ENCODE measurements at regions of chr1 and their contacts with region 1.

Region 1: DNA sequence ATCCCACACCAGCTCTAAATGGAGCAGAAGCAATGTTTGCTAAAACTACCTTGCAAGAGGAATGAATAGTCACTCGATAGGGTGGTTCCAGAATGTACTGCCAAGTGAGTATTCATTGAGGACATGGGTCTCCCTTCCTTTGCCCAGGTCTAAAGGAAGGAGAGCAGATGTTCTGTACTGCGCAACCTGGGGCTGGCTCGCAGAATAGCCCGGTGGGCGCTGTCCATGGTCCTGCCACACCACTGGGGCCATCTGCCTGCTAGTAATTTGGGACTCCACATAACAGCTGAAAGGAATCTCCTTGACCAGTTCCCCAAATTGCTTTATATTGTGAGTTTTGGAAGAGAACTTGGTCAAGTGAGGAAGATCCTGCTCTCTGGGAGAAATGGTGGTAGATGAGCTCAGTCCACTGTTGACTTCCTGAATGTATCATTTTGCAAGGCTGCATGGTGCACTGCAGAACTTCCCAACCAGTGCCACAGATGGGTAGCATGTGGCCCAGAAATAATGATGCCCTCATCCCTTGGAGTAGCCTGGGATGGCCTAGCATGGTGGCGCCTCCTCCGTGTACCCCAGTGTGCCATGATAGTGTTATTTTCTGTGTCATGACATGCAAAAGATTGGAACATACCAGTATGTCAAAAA is 5.7 kb downstream of the SLC6A17 start:
- DNase-seq: peak; percentile 71
- H3K4me3 Mint-ChIP-seq: no peak overlapping the region
- H3K27ac Mint-ChIP-seq: no peak overlapping the region
- H3K4me1 Mint-ChIP-seq: no peaks in the 10 kb centered on the region
- H3K27me3 Mint-ChIP-seq: peaks cover 53% of the 10 kb centered on the region

Region 2: GRCh38 chr1:109397538-109398342 is 758.3 kb before region 1 on chr1 and contains the start of gene SORT1:
- CTCF ChIA-PET with region 1: no interaction called
- intact Hi-C with region 1: no loop called
- DNase-seq: peak; percentile 53
- H3K4me3 Mint-ChIP-seq: peak within 1 kb of the TSS; percentile 77
- H3K27ac Mint-ChIP-seq: no peak within 1 kb of the TSS
- H3K4me1 Mint-ChIP-seq: peaks cover 8% of the 10 kb centered on the region
- H3K27me3 Mint-ChIP-seq: peaks cover 35% of the 10 kb centered on the region
- total RNA-seq, gene SORT1: 0.32 to 0.33 TPM

Region 3: DNA sequence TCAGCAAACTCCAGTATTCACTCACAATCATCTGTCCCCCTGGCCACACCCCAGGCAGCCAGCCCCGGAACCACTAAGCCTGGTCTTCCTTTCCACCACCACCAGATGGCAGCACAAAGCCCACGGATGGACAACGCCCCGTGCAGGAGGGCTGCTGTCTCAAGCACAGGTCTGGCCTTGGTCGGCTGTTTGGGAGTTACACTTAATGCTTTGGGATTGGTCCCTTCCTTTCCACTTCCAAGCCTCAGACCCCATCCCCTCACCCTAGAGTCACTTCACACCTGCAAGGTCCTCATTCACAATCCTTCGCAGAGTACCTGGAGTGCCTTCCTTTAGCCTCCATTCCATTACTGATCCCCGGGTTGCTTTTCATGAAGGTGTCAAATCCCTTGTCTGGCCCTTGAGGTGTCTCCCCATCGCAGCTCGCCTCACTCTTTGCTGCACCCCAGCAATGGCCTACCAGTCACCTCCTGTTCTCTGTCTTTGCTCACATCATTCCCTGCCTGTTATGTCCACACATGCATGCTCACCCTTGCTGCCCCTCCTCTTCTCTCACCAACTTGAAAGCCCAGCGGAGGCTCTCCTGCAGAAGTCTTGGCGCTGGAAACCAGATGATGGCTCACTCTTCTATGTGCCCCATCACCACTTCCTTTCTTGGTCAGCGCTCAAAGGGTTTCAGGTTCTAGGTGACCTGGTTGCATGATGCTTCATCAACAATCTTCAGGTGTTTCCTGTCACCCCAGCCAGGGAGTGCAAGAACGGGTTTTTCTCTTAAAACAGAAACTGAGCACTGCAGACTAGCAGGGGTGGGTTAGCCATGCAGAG is 475.1 kb after region 1 on chr1:
- CTCF ChIA-PET with region 1: no interaction called
- intact Hi-C with region 1: no loop called
- DNase-seq: peak; percentile 92
- H3K4me3 Mint-ChIP-seq: no peak overlapping the region
- H3K27ac Mint-ChIP-seq: no peak overlapping the region
- H3K4me1 Mint-ChIP-seq: peaks cover 54% of the 10 kb centered on the region
- H3K27me3 Mint-ChIP-seq: no peaks in the 10 kb centered on the region

Region 4: GRCh38 chr1:110746579-110747160 is 590.7 kb after region 1 on chr1:
- CTCF ChIA-PET with region 1: no interaction called
- intact Hi-C with region 1: loop called (anchors 2 kb)
- DNase-seq: peak; percentile 77
- H3K4me3 Mint-ChIP-seq: no peak overlapping the region
- H3K27ac Mint-ChIP-seq: no peak overlapping the region
- H3K4me1 Mint-ChIP-seq: no peaks in the 10 kb centered on the region
- H3K27me3 Mint-ChIP-seq: peaks cover 6% of the 10 kb centered on the region

Measured in activated naive CD4-positive, alpha-beta T cell treated with anti-CD3 and anti-CD28 coated beads for 36 hours (primary cell).